ENCODE measurements at regions of chr9 and their contacts with region 1.

Region 1: DNA sequence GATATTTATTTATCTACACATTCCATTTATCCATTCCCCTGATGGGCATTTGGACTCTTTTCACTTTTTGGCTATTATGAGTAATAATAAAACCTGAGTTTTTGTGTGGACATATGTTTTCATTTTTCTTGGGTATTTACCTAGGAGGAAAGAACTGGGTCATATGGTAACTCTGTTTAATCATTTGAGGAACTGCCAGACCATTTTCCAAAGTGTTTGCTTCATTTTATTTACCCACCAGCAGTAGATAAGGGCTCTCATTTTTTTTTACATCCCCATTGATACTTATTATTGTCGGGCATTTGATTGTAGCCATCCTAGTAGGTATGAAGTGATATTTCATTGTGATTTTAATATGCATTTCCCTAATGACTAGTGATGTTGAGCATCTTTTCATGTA is 7.7 kb upstream of the PTPDC1 start:
- DNase-seq: no peak
- CTCF ChIP-seq: no peak

Region 2: DNA sequence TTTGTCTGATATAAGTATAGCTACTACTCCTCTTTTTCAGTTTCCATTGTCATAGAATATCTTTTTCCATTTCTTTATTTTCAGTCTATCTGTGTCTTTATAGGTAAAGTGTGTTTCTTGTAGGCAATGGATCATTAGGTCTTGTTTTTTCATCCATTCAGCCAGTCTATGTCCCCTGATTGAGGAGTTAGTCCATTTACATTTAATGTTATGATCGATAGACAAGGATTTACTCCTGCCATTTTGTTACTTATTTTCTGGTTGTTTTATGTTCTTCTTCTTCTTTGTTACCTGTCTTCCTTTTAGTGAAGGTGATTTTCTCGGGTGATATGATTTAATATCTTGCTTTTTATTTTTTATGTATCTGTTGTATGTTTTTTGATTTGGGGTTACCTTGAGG is 290.4 kb before region 1 on chr9:
- in situ Hi-C with region 1: no loop called
- DNase-seq: no peak
- CTCF ChIP-seq: no peak

Region 3: DNA sequence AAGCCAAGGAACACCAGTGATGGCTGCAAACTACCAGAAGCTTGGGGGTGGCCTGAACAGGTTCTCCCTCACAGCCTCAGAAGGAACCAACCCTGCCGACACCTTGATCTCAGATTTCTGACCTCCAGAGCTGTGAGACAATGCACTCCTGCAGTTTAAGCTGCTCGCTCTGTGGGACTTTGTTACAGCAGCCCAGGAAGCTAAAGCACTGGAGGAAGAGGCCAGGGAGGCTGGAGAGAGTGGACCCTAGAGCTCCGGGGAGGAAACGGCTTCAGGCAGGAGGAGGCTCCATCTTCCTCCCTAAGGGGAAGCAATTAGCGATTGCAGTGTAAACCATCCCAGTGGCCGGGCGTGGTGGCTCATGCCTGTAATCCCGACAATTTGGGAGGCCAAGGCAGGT is 146.5 kb before region 1 on chr9:
- in situ Hi-C with region 1: no loop called
- DNase-seq: no peak
- CTCF ChIP-seq: no peak

Region 4: GRCh38 chr9:94120854-94121376 is 44.4 kb after region 1 on chr9:
- in situ Hi-C with region 1: no loop called
- DNase-seq: no peak
- CTCF ChIP-seq: no peak

Region 5: GRCh38 chr9:94199776-94200175 is 123.2 kb after region 1 on chr9:
- in situ Hi-C with region 1: loop called (anchors 10 kb)
- DNase-seq: no peak
- CTCF ChIP-seq: no peak

Region 6: GRCh38 chr9:94445846-94446245 is 369.3 kb after region 1 on chr9:
- in situ Hi-C with region 1: no loop called
- DNase-seq: no peak
- CTCF ChIP-seq: no peak

Measured in GM13977 (cell line).